PC-9 (cell line): ENCODE measurements at regions of chr7 and their contacts with region 1.

Region 1: DNA sequence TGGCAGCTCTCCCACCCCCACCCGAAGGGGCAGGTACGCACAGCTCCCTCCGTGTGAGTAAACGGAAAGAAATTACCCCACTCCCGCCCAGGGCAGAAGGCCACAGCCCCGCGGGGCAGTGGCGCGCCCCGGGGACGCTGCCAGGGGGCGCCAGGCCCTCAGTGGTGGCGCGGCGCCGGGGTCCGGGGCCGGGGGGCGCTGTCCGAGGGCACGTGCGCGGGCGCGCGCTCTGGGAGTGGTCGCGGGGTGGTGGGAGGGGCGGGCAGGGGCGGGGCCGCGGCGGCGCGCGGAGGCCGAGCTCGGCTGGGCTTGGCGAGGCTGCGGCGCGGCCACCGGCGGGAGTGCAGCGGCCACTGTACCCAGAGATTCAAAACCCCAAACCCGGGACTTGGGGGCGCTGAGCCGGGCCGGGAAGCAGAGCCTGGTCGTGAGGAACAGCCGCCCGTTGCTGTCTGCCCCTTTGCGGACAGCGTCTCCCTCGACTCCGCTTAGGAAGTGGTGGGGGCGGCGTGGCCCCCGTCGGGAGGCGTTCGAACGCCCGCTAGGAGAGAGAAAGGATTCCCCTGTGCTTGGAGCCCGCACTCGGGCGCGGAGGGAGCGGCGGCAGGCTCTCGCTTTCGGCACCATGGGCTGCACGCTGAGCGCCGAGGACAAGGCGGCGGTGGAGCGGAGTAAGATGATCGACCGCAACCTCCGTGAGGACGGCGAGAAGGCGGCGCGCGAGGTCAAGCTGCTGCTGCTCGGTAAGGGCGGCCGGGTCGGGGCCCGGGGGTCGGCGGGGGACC is at the start of gene GNAI1:
- DNase-seq: peak; percentile 76 to 87
- H3K4me3 ChIP-seq: peak within 1 kb of the TSS; percentile 97
- H3K27ac ChIP-seq: peak within 1 kb of the TSS; percentile 69
- H3K4me1 ChIP-seq: peaks cover 16% of the 10 kb centered on the region
- H3K27me3 ChIP-seq: no peaks in the 10 kb centered on the region
- CTCF ChIP-seq: no peak; the same call in 1 of the 2 replicates
- total RNA-seq, gene GNAI1: 16.8 and 25.6 TPM in 2 replicates

Region 2: GRCh38 chr7:80039251-80039884 is 95.4 kb before region 1 on chr7:
- CTCF ChIA-PET with region 1: no interaction called
- POLR2A ChIA-PET with region 1: no interaction called
- intact Hi-C with region 1: no loop called
- DNase-seq: no peak
- H3K4me3 ChIP-seq: no peak overlapping the region
- H3K27ac ChIP-seq: no peak overlapping the region
- H3K4me1 ChIP-seq: no peaks in the 10 kb centered on the region
- H3K27me3 ChIP-seq: no peaks in the 10 kb centered on the region
- CTCF ChIP-seq: no peak

Region 3: DNA sequence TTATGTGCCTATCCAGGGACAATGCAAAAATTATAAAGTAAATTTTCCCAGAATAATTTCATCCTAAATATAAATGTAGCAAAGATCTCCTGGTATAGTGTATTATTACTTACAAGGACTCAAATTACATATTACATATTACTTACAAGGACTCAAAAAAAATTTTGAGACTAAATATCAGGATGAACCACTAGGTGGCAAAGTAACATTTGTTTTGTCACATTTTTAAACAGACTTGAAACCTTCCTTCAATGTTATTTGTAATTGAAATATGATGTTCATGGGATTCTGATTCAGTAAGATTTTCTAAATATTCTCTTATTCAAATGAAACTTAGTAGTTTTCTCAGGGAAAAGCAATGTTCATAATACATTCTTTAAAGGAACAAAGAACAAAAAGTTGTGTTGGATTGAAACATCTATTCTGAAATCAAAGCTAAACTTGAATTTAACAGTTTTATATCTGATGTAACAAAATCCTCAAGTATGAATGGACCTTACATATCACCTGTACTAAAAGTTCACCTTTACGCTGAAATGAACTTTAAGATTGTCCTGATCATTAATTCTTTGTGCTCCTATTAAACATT is 74.4 kb before region 1 on chr7:
- CTCF ChIA-PET with region 1: interaction called, 21 read pairs
- POLR2A ChIA-PET with region 1: no interaction called
- intact Hi-C with region 1: loop called (anchors 5 kb)
- DNase-seq: peak in 1 of 2 experiments; percentile 58
- H3K4me3 ChIP-seq: no peak overlapping the region
- H3K27ac ChIP-seq: no peak overlapping the region
- H3K4me1 ChIP-seq: no peaks in the 10 kb centered on the region
- H3K27me3 ChIP-seq: no peaks in the 10 kb centered on the region
- CTCF ChIP-seq: peak; percentile 88

Region 4: DNA sequence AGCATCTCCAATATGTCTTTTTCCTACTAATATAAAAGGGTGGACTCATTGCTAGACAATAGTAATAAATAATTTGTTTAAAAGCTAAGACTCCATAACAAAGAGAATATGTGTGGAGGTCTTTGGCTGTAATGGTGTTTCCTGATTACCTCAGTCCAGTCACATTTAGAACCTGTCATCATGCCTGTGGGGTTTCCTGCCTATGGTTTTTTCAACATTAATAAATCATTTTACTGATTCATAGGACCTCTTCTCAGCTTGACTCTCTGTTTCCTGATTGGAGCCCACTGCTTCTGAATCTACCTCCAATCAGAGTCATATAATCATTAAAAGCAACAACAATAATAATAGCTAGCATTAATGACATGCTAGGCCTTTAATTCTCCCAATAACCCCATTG is 52.5 kb before region 1 on chr7:
- CTCF ChIA-PET with region 1: no interaction called
- POLR2A ChIA-PET with region 1: no interaction called
- intact Hi-C with region 1: no loop called
- DNase-seq: no peak
- H3K4me3 ChIP-seq: no peak overlapping the region
- H3K27ac ChIP-seq: no peak overlapping the region
- H3K4me1 ChIP-seq: 0 out of 2 replicates have a peak, but pooled peaks cover 8% of the 10 kb centered on the region
- H3K27me3 ChIP-seq: no peaks in the 10 kb centered on the region
- CTCF ChIP-seq: no peak

Region 5: GRCh38 chr7:80145780-80146422 is 11.2 kb after region 1 on chr7:
- CTCF ChIA-PET with region 1: interaction called, 4 read pairs
- POLR2A ChIA-PET with region 1: interaction called, 12 read pairs
- intact Hi-C with region 1: no loop called
- DNase-seq: peak; percentile 36 to 78
- H3K4me3 ChIP-seq: no peak overlapping the region
- H3K27ac ChIP-seq: peak overlapping the region; percentile 7; the same call in 1 of the 2 replicates
- H3K4me1 ChIP-seq: peaks cover 18% of the 10 kb centered on the region
- H3K27me3 ChIP-seq: no peaks in the 10 kb centered on the region
- CTCF ChIP-seq: no peak

Region 6: DNA sequence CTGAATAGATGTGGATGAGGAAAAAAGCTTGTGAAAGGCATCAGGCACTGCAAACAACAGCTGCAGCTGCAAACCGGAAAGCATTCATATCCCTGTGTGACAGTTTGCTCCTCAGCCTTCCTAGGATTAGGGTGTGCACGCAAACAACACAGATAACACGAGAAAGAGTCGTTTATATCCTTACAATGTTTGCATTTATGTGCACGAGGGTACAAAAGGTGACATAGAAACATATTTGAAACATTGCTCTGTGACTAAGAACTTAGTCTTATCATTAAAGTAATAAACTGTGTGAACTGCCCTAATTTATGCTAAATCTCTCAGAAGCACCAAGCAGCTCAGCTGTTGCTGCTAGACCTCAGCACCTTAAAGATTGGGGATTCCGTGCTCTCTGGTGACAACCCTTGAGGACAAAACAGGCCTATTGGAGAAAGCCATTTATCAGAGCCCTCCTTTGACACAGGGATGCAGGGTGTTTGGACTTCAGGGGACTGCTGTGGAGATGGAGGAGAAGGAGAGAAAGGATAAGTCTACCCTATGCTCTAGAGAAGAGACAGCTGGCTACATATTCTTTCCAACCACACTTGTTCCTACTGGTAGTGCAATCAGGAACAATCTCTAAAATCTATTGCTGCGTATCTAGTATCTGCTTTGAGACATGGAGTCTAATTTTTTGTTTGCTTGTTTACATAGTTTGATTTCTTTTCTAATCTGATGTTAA is 200.9 kb after region 1 on chr7:
- CTCF ChIA-PET with region 1: no interaction called
- POLR2A ChIA-PET with region 1: no interaction called
- intact Hi-C with region 1: no loop called
- DNase-seq: no peak
- H3K4me3 ChIP-seq: no peak overlapping the region
- H3K27ac ChIP-seq: no peak overlapping the region
- H3K4me1 ChIP-seq: no peaks in the 10 kb centered on the region
- H3K27me3 ChIP-seq: no peaks in the 10 kb centered on the region
- CTCF ChIP-seq: no peak

Region 7: GRCh38 chr7:80392229-80393169 is 257.8 kb after region 1 on chr7:
- CTCF ChIA-PET with region 1: interaction called, 35 read pairs
- POLR2A ChIA-PET with region 1: no interaction called
- intact Hi-C with region 1: loop called (anchors 2 kb)
- DNase-seq: peak in 1 of 2 experiments; percentile 48
- H3K4me3 ChIP-seq: no peak overlapping the region
- H3K27ac ChIP-seq: no peak overlapping the region
- H3K4me1 ChIP-seq: no peaks in the 10 kb centered on the region
- H3K27me3 ChIP-seq: no peaks in the 10 kb centered on the region
- CTCF ChIP-seq: peak; percentile 75

Region 8: GRCh38 chr7:80563561-80564327 is 429.0 kb after region 1 on chr7:
- CTCF ChIA-PET with region 1: interaction called, 4 read pairs
- POLR2A ChIA-PET with region 1: no interaction called
- intact Hi-C with region 1: loop called (anchors 10 kb)
- DNase-seq: peak; percentile 95
- H3K4me3 ChIP-seq: no peak overlapping the region
- H3K27ac ChIP-seq: peak overlapping the region; percentile 33
- H3K4me1 ChIP-seq: peaks cover 20% of the 10 kb centered on the region
- H3K27me3 ChIP-seq: no peaks in the 10 kb centered on the region
- CTCF ChIP-seq: no peak

Region 9: DNA sequence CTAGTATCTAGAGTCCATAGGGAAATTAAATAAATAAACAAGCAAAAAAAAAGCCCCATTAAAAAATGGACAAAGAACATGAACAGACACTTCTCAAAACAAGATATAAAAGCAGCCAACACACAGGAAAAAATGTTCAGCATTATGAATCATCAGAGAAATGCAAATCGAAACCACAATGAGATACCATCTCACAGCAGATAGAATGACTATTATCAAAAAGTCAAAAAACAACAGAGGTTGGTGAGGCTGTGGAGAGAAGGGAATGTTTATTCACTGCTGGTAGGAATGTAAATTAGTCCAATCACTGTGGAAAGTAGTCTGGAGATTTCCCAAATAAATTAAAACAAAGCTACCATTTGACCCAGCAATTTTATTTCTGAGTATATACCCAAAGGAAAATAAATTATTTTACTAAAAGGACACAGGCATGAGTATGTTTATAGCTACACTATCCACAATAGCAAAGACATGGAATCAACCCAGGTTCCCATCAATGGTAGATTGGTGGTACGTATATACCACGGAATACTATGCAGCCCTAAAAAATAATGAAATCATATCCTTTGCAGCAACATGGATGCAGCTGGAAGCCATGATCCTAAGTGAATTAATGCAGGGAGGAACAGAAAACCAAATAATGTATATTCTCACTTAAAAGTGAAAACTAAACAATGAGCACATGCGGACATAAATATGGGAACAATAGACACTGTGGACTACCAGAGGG is 1150.6 kb after region 1 on chr7:
- CTCF ChIA-PET with region 1: no interaction called
- POLR2A ChIA-PET with region 1: no interaction called
- intact Hi-C with region 1: loop called (anchors 10 kb)
- DNase-seq: peak; percentile 9 to 68
- H3K4me3 ChIP-seq: no peak overlapping the region
- H3K27ac ChIP-seq: peak overlapping the region; percentile 47
- H3K4me1 ChIP-seq: peaks cover 10% of the 10 kb centered on the region
- H3K27me3 ChIP-seq: no peaks in the 10 kb centered on the region
- CTCF ChIP-seq: no peak